CD4-positive, alpha-beta memory T cell (primary cell): ENCODE measurements at regions of chr17 and their contacts with region 1.

Region 1: GRCh38 chr17:42221937-42222745 is 27.8 kb upstream of the GHDC start:
- DNase-seq: peak; percentile 58 to 67 (median 66)
- H3K4me3 ChIP-seq: no peak overlapping the region
- H3K4me3 Mint-ChIP-seq: no peak overlapping the region
- H3K27ac ChIP-seq: no peak overlapping the region
- H3K27ac Mint-ChIP-seq: peak overlapping the region in 6 of 7 donors; percentile 66 to 85 (median 80)
- H3K4me1 ChIP-seq: no peaks in the 10 kb centered on the region
- H3K4me1 Mint-ChIP-seq: peaks cover 5 to 8% (median 7%) of the 10 kb centered on the region in 4 donors
- H3K27me3 ChIP-seq: no peaks in the 10 kb centered on the region
- H3K27me3 Mint-ChIP-seq: no peaks in the 10 kb centered on the region

Region 2: GRCh38 chr17:42233941-42234340 is 11.8 kb after region 1 on chr17:
- CTCF ChIA-PET with region 1: interaction called, 22 read pairs
- POLR2A ChIA-PET with region 1: no interaction called
- intact Hi-C with region 1: no loop called
- DNase-seq: no peak
- H3K4me3 ChIP-seq: no peak overlapping the region
- H3K4me3 Mint-ChIP-seq: peak overlapping the region in 1 of 8 donors; percentile 17
- H3K27ac ChIP-seq: no peak overlapping the region
- H3K27ac Mint-ChIP-seq: peak overlapping the region in 6 of 7 donors; percentile 8 to 57 (median 45)
- H3K4me1 ChIP-seq: peaks cover 41% of the 10 kb centered on the region
- H3K4me1 Mint-ChIP-seq: peaks cover 27 to 55% (median 43%) of the 10 kb centered on the region in 4 donors
- H3K27me3 ChIP-seq: no peaks in the 10 kb centered on the region
- H3K27me3 Mint-ChIP-seq: no peaks in the 10 kb centered on the region

Region 3: GRCh38 chr17:42248351-42249179 is 26.4 kb after region 1 on chr17:
- CTCF ChIA-PET with region 1: interaction called, 40 read pairs
- POLR2A ChIA-PET with region 1: interaction called, 20 read pairs
- intact Hi-C with region 1: no loop called
- DNase-seq: peak; percentile 82 to 95 (median 88)
- H3K4me3 ChIP-seq: peak overlapping the region; percentile 20 to 45
- H3K4me3 Mint-ChIP-seq: peak overlapping the region; percentile 78 to 96 (median 85)
- H3K27ac ChIP-seq: peak overlapping the region; percentile 90
- H3K27ac Mint-ChIP-seq: peak overlapping the region; percentile 92 to 99 (median 98)
- H3K4me1 ChIP-seq: peaks cover 78% of the 10 kb centered on the region
- H3K4me1 Mint-ChIP-seq: peaks cover 55 to 81% (median 68%) of the 10 kb centered on the region in 4 donors
- H3K27me3 ChIP-seq: no peaks in the 10 kb centered on the region
- H3K27me3 Mint-ChIP-seq: no peaks in the 10 kb centered on the region

Region 4: DNA sequence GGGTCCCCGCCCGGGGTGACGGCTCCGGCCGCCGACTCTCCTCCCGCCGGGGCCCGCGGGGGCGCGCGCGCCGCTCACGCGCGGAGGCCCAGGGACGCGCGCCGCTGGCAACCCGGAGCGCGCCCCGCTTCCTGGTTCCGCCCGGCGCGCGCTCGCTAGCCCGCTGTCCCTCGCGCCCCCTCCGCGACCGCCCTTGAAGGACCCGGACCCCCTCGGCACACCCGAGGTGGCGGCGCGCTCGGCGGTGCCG is 54.1 kb after region 1 on chr17 and contains the start of gene STAT5B:
- CTCF ChIA-PET with region 1: interaction called, 12 read pairs
- POLR2A ChIA-PET with region 1: interaction called, 26 read pairs
- intact Hi-C with region 1: loop called (anchors 10 kb)
- DNase-seq: peak in 4 of 5 donors; percentile 73 to 82 (median 76)
- H3K4me3 ChIP-seq: peak within 1 kb of the TSS; percentile 87 to 97
- H3K4me3 Mint-ChIP-seq: peak within 1 kb of the TSS; percentile 97 to 100 (median 98)
- H3K27ac ChIP-seq: peak within 1 kb of the TSS; percentile 92
- H3K27ac Mint-ChIP-seq: peak within 1 kb of the TSS; percentile 97 to 100 (median 99)
- H3K4me1 ChIP-seq: peaks cover 42% of the 10 kb centered on the region
- H3K4me1 Mint-ChIP-seq: peaks cover 31 to 58% (median 46%) of the 10 kb centered on the region in 4 donors
- H3K27me3 ChIP-seq: no peaks in the 10 kb centered on the region
- H3K27me3 Mint-ChIP-seq: no peaks in the 10 kb centered on the region
- total RNA-seq, gene STAT5B: 244 to 261 TPM

Region 5: GRCh38 chr17:42305543-42306384 is 83.6 kb after region 1 on chr17:
- CTCF ChIA-PET with region 1: interaction called, 56 read pairs
- POLR2A ChIA-PET with region 1: interaction called, 3 read pairs
- intact Hi-C with region 1: no loop called
- DNase-seq: peak in 2 of 5 donors; percentile 23 to 42
- H3K4me3 ChIP-seq: no peak overlapping the region
- H3K4me3 Mint-ChIP-seq: peak overlapping the region in 5 of 8 donors; percentile 2 to 68 (median 20)
- H3K27ac ChIP-seq: no peak overlapping the region
- H3K27ac Mint-ChIP-seq: peak overlapping the region; percentile 61 to 88 (median 77)
- H3K4me1 ChIP-seq: peaks cover 16% of the 10 kb centered on the region
- H3K4me1 Mint-ChIP-seq: peaks cover 11 to 35% (median 25%) of the 10 kb centered on the region in 4 donors
- H3K27me3 ChIP-seq: no peaks in the 10 kb centered on the region
- H3K27me3 Mint-ChIP-seq: no peaks in the 10 kb centered on the region

Region 6: DNA sequence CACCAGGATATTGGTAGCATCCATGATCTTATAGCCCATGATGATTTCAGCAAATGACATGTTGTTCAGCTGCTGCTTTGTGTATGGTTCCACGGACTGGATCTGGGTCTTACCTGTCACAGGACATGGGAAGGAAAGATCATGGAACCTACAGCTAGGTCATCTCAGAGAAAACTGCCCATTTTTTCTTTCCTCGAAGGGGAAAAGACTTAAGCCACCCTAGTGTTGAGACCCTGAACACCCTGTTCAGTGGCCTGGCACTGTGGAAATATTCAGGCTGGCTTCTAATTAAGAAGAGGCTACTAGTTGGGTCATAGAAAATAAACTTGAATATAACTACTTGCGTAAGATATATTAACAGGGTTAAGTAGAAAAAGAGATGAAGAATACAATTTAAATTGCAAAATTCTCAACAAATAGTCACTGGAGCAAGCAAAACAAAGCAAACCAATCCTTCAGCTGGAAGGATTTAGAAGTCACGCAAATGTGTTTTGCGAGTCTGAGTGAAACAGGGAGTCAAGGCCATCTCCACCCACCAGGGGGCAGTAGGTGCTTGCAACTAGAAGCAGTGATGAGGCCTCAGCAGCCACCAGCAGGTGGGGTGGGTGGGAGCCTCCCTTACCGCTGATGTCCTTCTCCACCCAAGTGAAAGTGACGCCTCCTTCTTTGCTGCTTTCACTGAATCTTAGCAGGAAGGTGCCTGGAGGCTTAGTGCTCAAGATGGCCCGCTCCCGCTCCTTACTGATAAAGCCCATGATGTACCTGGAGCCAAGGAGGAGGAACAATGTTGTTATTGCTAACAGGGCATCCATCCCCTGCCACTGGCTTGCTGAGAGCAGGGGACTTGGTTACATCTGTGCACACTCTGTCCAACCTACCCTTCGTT is 100.5 kb after region 1 on chr17:
- CTCF ChIA-PET with region 1: interaction called, 24 read pairs
- POLR2A ChIA-PET with region 1: no interaction called
- intact Hi-C with region 1: loop called (anchors 1 kb)
- DNase-seq: peak; percentile 91 to 95 (median 91)
- H3K4me3 ChIP-seq: no peak overlapping the region
- H3K4me3 Mint-ChIP-seq: peak overlapping the region in 1 of 8 donors; percentile 6
- H3K27ac ChIP-seq: no peak overlapping the region
- H3K27ac Mint-ChIP-seq: peak overlapping the region; percentile 68 to 94 (median 81)
- H3K4me1 ChIP-seq: peaks cover 24% of the 10 kb centered on the region
- H3K4me1 Mint-ChIP-seq: peaks cover 18 to 44% (median 29%) of the 10 kb centered on the region in 4 donors
- H3K27me3 ChIP-seq: no peaks in the 10 kb centered on the region
- H3K27me3 Mint-ChIP-seq: no peaks in the 10 kb centered on the region

Region 7: DNA sequence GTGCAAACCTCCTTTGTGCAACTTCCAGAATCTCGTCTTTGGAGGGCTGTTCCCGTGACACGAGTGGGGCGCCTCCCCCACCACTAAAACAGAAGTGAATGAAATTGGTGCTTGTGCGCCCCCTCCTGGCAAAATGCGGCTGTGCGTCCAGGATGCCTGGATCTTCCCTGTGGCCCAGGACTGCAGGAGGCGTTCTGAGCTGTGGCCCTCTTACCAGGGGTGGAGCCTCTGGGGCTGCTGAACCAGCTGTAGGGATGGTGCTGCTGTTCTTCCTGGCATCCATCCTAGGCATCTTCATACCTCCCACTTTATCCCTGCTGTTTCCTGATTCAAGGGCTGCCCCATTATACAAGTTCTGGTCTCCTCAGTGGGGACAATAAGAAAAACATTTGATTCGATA is 295.4 kb after region 1 on chr17:
- CTCF ChIA-PET with region 1: interaction called, 13 read pairs
- POLR2A ChIA-PET with region 1: no interaction called
- intact Hi-C with region 1: no loop called
- DNase-seq: peak; percentile 73 to 79 (median 76)
- H3K4me3 ChIP-seq: no peak overlapping the region
- H3K4me3 Mint-ChIP-seq: no peak overlapping the region
- H3K27ac ChIP-seq: no peak overlapping the region
- H3K27ac Mint-ChIP-seq: peak overlapping the region in 1 of 7 donors; percentile 37
- H3K4me1 ChIP-seq: peaks cover 7% of the 10 kb centered on the region
- H3K4me1 Mint-ChIP-seq: peaks cover 0 to 8% (median 3%) of the 10 kb centered on the region in 4 donors
- H3K27me3 ChIP-seq: no peaks in the 10 kb centered on the region
- H3K27me3 Mint-ChIP-seq: no peaks in the 10 kb centered on the region